K562 (cell line): ENCODE measurements at regions of chr17 and their contacts with region 1.

Region 1: DNA sequence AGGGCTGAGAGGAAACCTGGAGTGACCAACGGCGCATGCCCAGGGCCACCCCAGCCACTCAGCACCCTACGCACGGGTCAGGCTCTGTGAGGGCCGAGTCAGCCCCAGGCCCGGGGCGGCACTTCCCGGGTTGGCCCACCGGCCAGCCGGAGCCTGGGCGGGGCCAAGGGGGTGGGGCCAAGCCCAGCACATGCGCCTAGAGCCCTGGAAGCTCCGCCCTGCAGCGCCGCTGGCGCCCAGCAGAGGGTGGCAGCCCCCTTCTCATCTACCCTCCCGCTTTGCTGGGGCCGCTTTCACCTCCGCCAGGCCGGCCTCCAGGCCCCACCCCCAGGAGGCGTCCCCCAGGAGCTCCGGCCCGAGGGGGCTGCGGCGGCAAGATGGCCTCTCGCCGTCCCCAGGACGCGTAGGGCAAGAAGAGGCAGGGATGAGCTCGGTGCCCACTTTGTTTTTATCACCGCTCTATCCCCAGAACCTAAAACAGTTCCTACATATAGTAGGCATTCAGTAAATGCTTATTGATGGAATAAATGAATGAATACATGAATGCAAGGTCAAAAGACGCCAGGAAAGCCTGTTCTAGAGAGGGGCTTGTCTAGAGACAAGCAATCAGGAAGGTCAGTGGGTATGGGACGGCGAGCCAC is 31.3 kb downstream of the MYO18A start:
- DNase-seq: peak; percentile 94 to 97 (median 96)
- ATAC-seq: peak; percentile 92
- H3K4me3 ChIP-seq: peak overlapping the region; percentile 27
- H3K27ac ChIP-seq: peak overlapping the region; percentile 69
- H3K4me1 ChIP-seq: peaks cover 49 to 63% of the 10 kb centered on the region in 2 experiments
- H3K27me3 ChIP-seq: no peaks in the 10 kb centered on the region
- CTCF ChIP-seq: peak; percentile 95 to 99 (median 98)
- EP300 ChIP-seq: no peak
- POLR2A ChIP-seq: no peak
- RAD21 ChIP-seq: peak; percentile 98

Region 2: GRCh38 chr17:29162738-29163341 is 13.9 kb after region 1 on chr17:
- CTCF ChIA-PET with region 1: no interaction called
- POLR2A ChIA-PET with region 1: interaction called, 15 read pairs
- in situ Hi-C with region 1: no loop called
- intact Hi-C with region 1: no loop called
- DNase-seq: peak; percentile 72 to 95 (median 86)
- ATAC-seq: peak; percentile 96
- H3K4me3 ChIP-seq: no peak overlapping the region
- H3K27ac ChIP-seq: peak overlapping the region; percentile 58
- H3K4me1 ChIP-seq: peaks cover 38 to 48% of the 10 kb centered on the region in 2 experiments
- H3K27me3 ChIP-seq: no peaks in the 10 kb centered on the region
- CTCF ChIP-seq: no peak
- EP300 ChIP-seq: peak; percentile 81
- POLR2A ChIP-seq: no peak
- RAD21 ChIP-seq: peak in 1 of 2 experiments; percentile 33; a peak in 1 of 4 replicates

Region 3: DNA sequence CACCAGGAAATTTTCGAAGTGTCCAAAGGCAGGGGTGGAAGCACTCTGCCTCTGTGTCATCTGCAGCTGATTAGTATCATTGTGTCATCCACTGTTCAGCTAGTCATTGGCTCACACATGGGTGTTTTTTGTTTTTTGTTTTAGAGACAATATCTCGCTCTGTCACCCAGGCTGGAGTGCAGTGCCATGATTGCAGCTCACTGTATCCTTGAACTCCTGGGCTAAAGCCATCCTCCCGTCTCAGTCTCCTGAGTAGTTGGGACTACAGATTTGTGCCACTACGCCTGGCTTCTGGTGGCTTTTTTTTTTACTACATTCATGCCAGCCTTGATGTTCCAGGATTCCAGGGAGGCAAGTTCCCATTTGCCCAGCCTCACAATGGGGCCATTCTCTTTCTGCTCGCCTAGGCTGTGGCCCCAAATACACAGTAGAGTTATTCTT is 63.8 kb after region 1 on chr17:
- CTCF ChIA-PET with region 1: no interaction called
- POLR2A ChIA-PET with region 1: no interaction called
- in situ Hi-C with region 1: loop called (anchors 5 kb)
- intact Hi-C with region 1: no loop called
- DNase-seq: no peak
- ATAC-seq: peak; percentile 45; the same call in 1 of the 3 replicates
- H3K4me3 ChIP-seq: no peak overlapping the region
- H3K27ac ChIP-seq: no peak overlapping the region
- H3K4me1 ChIP-seq: no peaks in the 10 kb centered on the region; a peak in 1 of 5 replicates
- H3K27me3 ChIP-seq: no peaks in the 10 kb centered on the region
- CTCF ChIP-seq: no peak
- EP300 ChIP-seq: no peak
- POLR2A ChIP-seq: no peak
- RAD21 ChIP-seq: no peak

Region 4: DNA sequence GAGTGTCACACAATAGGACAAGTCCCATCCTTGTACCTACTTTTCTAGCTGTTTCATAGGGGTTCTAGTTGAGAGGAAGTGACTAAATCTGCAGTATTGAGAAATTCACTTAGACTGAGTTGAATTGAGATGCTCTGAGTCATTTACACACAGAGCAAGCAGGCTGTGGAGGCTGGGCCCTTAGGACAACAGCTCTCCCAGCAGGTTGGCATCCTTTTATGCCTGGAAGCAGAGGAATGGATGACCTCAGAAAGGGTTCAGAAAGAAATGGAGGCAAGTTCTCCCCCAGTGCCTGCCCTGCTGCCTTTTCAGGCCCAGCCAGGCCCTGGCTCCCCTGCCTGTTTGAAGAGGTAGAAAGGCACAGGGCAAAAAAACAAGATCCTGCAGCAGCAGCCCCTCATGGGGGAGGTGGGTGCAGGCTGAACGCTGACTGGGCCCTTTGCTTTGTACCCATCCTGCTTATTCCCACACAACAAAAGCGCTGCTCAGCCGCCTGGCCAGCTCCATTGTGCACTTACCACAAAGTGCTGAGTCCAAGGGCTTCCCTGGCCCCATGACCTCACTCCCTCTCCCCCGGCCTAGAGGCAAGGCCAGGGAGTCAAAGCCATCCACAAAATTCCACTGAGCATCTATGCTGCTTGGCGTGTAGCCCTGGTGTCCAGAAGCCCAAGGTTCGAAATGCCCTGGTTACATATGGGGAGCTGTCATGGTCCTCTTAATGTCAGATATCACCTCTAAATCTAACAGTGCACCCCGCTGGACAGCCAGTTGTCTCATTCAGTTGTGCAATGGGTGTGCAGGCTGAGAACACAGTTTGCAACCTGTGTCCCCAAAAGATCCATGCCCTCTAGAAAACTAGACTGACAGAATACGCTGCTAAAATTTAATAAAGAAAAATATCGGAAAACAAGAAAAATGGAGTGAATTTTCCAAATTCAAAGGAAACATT is 92.4 kb after region 1 on chr17:
- CTCF ChIA-PET with region 1: no interaction called
- POLR2A ChIA-PET with region 1: no interaction called
- in situ Hi-C with region 1: no loop called
- intact Hi-C with region 1: loop called (anchors 10 kb)
- DNase-seq: peak in 1 of 4 experiments; percentile 25
- ATAC-seq: peak; percentile 52
- H3K4me3 ChIP-seq: no peak overlapping the region
- H3K27ac ChIP-seq: no peak overlapping the region
- H3K4me1 ChIP-seq: peaks cover 3 to 13% of the 10 kb centered on the region in 2 experiments; a peak in 3 of 5 replicates
- H3K27me3 ChIP-seq: no peaks in the 10 kb centered on the region
- CTCF ChIP-seq: peak in 2 of 3 experiments; percentile 17 to 35; a peak in 2 of 6 replicates
- EP300 ChIP-seq: no peak
- POLR2A ChIP-seq: no peak
- RAD21 ChIP-seq: peak in 1 of 2 experiments; percentile 38; a peak in 2 of 4 replicates

Region 5: GRCh38 chr17:29331708-29332085 is 182.8 kb after region 1 on chr17:
- CTCF ChIA-PET with region 1: no interaction called
- POLR2A ChIA-PET with region 1: no interaction called
- in situ Hi-C with region 1: no loop called
- intact Hi-C with region 1: no loop called
- DNase-seq: no peak
- ATAC-seq: no peak
- H3K4me3 ChIP-seq: no peak overlapping the region
- H3K27ac ChIP-seq: no peak overlapping the region
- H3K4me1 ChIP-seq: no peaks in the 10 kb centered on the region
- H3K27me3 ChIP-seq: peaks cover 0 to 7% of the 10 kb centered on the region in 2 experiments; a peak in 3 of 5 replicates
- CTCF ChIP-seq: no peak
- EP300 ChIP-seq: no peak
- POLR2A ChIP-seq: no peak
- RAD21 ChIP-seq: no peak

Region 6: DNA sequence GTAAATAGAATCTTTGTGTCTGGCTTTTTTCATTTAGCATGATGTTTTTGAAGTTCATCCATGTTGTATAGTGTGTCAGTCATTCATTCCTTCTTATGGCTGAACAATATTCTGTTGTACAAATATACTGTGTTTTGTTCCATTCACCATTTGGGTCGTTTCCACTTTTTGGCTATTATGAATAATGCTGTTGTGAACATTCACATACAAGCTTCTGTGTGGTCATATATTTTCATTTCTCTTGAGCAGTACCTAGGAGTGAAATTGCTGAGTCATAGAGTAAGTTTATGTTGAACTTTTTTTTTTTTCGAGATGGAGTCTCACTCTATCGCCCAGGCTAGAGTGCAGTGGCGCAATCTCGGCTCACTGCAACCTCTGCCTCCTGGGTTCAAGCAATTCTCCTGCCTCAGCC is 208.9 kb after region 1 on chr17:
- CTCF ChIA-PET with region 1: no interaction called
- POLR2A ChIA-PET with region 1: no interaction called
- in situ Hi-C with region 1: no loop called
- intact Hi-C with region 1: loop called (anchors 10 kb)
- DNase-seq: peak in 1 of 4 experiments; percentile 14
- ATAC-seq: peak; percentile 79
- H3K4me3 ChIP-seq: no peak overlapping the region
- H3K27ac ChIP-seq: no peak overlapping the region
- H3K4me1 ChIP-seq: peaks cover 0 to 2% of the 10 kb centered on the region in 2 experiments; a peak in 1 of 5 replicates
- H3K27me3 ChIP-seq: no peaks in the 10 kb centered on the region; a peak in 1 of 5 replicates
- CTCF ChIP-seq: no peak
- EP300 ChIP-seq: 0 out of 2 replicates have a peak, but pooled peaks have one; percentile 12
- POLR2A ChIP-seq: no peak
- RAD21 ChIP-seq: no peak

Region 7: GRCh38 chr17:29617125-29617480 is 468.2 kb after region 1 on chr17:
- CTCF ChIA-PET with region 1: no interaction called
- POLR2A ChIA-PET with region 1: interaction called, 5 read pairs
- in situ Hi-C with region 1: no loop called
- intact Hi-C with region 1: loop called (anchors 10 kb)
- DNase-seq: peak; percentile 56 to 66 (median 60)
- ATAC-seq: peak; percentile 23
- H3K4me3 ChIP-seq: no peak overlapping the region
- H3K27ac ChIP-seq: no peak overlapping the region
- H3K4me1 ChIP-seq: peaks cover 27 to 66% of the 10 kb centered on the region in 2 experiments
- H3K27me3 ChIP-seq: no peaks in the 10 kb centered on the region
- CTCF ChIP-seq: peak; percentile 55 to 72 (median 62)
- EP300 ChIP-seq: no peak
- POLR2A ChIP-seq: no peak
- RAD21 ChIP-seq: no peak; a peak in 1 of 4 replicates